HCT116 (cell line): ENCODE measurements at regions of chr10 and their contacts with region 1.

Region 1: GRCh38 chr10:121088524-121088923 is 237.4 kb downstream of the WDR11 start:
- DNase-seq: no peak
- ATAC-seq: peak; percentile 84
- H3K4me3 ChIP-seq: no peak overlapping the region
- H3K27ac ChIP-seq: no peak overlapping the region
- H3K4me1 ChIP-seq: peaks cover 7 to 13% of the 10 kb centered on the region in 2 experiments; a peak in 3 of 4 replicates
- H3K27me3 ChIP-seq: 0 out of 2 replicates have a peak, but pooled peaks cover 5% of the 10 kb centered on the region
- CTCF ChIP-seq: peak; percentile 35 to 60 (median 38); a peak in 4 of 6 replicates
- POLR2A ChIP-seq: no peak
- RAD21 ChIP-seq: peak; percentile 64

Region 2: DNA sequence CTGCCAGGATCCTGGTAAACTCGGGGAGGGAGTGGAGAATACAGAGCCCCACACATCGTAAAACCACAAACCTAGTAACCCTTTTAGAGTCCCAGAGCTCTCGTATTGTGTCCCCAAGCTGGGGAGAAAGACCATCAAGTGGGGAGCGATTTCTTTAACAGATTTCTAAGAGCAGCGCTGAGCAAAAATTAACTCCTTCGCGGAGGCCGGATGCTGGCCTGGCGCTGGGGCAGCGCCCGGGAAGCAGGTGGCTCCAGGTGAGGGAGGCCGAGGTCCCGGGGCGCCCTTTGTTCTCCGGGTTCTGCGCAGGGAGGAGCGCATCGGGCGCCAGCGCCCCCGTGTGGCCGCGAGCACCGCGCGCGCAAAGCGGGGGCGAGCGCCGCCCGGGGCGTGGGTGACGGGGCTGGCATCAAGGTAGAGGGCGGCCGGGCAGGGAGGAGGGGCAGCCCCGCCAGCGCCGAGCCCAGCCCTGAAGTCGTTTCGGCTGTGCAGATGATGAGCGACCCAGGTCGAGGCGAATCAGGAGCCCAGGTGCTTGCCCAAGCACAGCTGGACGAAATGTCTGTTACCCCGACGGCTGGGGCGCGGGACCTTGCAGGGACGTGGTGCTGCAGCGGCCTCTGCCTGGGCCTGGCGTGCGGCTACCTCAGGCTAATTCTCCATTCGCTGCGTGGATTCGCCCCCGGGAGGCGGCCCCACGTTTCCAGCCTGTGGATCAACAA is 520.1 kb after region 1 on chr10:
- CTCF ChIA-PET with region 1: no interaction called
- POLR2A ChIA-PET with region 1: no interaction called
- RAD21 ChIA-PET with region 1: no interaction called
- intact Hi-C with region 1: loop called (anchors 1 kb)
- DNase-seq: peak; percentile 43
- ATAC-seq: peak; percentile 95
- H3K4me3 ChIP-seq: peak overlapping the region; percentile 17 to 18
- H3K27ac ChIP-seq: no peak overlapping the region; the same call in 1 of the 2 replicates
- H3K4me1 ChIP-seq: peaks cover 7 to 17% of the 10 kb centered on the region in 2 experiments; a peak in 3 of 4 replicates
- H3K27me3 ChIP-seq: no peaks in the 10 kb centered on the region
- CTCF ChIP-seq: peak; percentile 90 to 98 (median 93)
- POLR2A ChIP-seq: no peak
- RAD21 ChIP-seq: peak; percentile 91

Region 3: DNA sequence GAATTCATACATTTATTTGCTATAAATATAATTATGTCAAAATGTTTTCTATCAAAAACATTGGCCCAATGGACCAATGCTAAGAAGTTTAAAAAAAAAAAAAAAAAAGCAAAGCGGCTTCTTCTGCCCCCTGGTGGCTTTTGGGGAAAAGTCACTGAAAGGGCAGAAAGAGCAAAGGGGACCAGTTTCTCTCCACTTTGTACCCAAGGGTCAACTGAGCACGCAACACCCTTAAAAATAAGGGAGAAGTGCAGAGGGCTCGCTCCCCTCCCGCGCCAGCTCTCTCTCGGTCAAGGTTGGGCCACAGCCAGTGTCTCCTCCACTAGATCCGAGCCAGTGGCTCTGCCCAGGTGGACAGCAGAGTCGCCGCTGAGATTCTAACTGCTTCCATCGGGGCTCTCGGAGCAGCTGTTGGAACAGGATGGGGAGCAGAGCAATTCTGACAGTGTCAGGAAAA is 646.1 kb after region 1 on chr10:
- CTCF ChIA-PET with region 1: no interaction called
- POLR2A ChIA-PET with region 1: no interaction called
- RAD21 ChIA-PET with region 1: no interaction called
- intact Hi-C with region 1: loop called (anchors 1 kb)
- DNase-seq: peak; percentile 19
- ATAC-seq: peak; percentile 64
- H3K4me3 ChIP-seq: no peak overlapping the region
- H3K27ac ChIP-seq: no peak overlapping the region
- H3K4me1 ChIP-seq: no peaks in the 10 kb centered on the region
- H3K27me3 ChIP-seq: no peaks in the 10 kb centered on the region
- CTCF ChIP-seq: peak; percentile 85 to 90 (median 89)
- POLR2A ChIP-seq: no peak
- RAD21 ChIP-seq: peak; percentile 78